Dorsolateral prefrontal cortex (tissue), 120 donors: ENCODE measurements at regions of chr3 and their contacts with region 1.

Region 1: GRCh38 chr3:141875374-141875892 is 1.0 kb upstream of the ATP1B3 start:
- DNase-seq: peak; percentile 72 to 90 (median 85)
- H3K4me3 ChIP-seq: peak overlapping the region; percentile 64 to 98 (median 87)
- H3K27ac ChIP-seq: peak overlapping the region; percentile 78 to 100 (median 98)
- H3K27me3 ChIP-seq: no peaks in the 10 kb centered on the region
- CTCF ChIP-seq: peak; percentile 62 to 91 (median 79)

Region 2: DNA sequence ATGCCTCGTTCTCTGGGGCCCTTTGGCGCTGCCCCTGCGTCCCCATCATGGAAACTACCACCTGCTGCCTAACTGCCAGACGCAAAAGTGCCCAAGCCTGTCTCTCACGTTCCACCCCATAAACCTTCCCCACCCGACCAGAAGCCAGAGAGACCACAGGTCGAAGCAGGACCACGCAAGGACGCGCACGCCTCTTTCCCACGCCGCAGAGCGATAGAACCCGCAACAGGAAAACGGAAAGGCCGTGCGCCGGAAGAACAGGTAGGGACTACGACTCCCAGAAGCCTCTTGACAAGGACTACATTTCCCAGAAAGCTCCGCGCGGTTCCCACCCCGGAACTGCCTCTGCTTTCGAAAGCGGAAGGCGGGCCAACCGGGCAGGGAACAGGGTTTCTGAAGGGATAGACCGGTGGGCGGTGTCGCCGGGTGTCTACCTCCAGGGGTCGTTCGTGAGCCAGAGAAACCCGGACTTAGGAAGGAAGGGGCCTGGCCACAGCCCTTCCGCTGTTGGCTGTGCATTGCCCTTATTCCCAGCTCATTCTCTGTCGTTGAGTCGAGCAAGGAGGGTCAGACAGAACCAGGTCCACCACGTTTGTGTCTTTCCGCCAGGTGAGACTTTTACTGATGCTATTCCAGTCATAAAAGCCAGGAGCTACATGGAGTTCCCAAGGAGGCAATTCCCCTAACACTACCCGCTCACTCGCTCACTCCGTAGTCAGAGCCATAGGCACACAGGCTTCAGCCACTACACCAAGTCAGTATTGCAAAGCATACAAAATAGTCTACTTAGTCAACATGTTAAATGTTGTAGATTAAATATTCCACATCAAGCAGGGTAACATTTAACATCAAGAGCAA is 563.7 kb before region 1 on chr3:
- intact Hi-C with region 1: loop called in 1 of 2 experiments (anchors 5 kb)
- DNase-seq: peak; percentile 97 to 99 (median 98)
- H3K4me3 ChIP-seq: peak overlapping the region; percentile 54 to 94 (median 75)
- H3K27ac ChIP-seq: peak overlapping the region; percentile 36 to 95 (median 83)
- H3K27me3 ChIP-seq: no peaks in the 10 kb centered on the region
- CTCF ChIP-seq: peak; percentile 50 to 92 (median 82)

Region 3: DNA sequence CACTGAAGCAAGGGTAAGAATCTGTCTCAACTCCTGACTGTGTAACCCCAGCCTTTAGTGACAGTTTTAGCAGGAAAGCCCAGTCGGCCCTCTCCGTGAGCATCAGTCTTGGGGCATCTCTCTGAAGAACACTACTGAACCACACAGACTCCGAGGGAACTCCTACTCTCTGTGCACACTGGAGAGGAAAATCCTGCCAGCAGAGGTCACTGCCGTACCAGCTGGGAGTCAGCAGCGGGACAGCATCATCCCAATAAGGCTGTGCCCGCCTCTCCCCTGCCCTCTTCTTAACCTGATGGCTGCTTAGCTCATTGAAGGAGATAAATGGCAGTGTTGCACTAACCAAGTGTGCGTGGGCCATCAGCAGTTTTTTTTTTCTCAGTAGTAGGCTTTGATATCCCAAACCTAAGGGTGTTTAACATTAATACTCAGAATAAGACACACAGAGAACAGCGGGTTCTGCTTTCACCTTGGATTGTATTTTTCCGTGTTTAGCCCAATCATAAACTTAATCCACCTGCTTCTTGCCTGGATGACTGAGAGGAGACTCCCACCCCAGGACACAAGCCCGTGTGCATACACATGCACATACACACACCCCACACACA is 415.2 kb before region 1 on chr3:
- intact Hi-C with region 1: loop called in 1 of 2 experiments (anchors 10 kb)
- DNase-seq: peak; percentile 80 to 92 (median 88)
- H3K4me3 ChIP-seq: no peak overlapping the region
- H3K27ac ChIP-seq: no peak overlapping the region
- H3K27me3 ChIP-seq: no peaks in the 10 kb centered on the region
- CTCF ChIP-seq: peak; percentile 50 to 98 (median 90)

Region 4: DNA sequence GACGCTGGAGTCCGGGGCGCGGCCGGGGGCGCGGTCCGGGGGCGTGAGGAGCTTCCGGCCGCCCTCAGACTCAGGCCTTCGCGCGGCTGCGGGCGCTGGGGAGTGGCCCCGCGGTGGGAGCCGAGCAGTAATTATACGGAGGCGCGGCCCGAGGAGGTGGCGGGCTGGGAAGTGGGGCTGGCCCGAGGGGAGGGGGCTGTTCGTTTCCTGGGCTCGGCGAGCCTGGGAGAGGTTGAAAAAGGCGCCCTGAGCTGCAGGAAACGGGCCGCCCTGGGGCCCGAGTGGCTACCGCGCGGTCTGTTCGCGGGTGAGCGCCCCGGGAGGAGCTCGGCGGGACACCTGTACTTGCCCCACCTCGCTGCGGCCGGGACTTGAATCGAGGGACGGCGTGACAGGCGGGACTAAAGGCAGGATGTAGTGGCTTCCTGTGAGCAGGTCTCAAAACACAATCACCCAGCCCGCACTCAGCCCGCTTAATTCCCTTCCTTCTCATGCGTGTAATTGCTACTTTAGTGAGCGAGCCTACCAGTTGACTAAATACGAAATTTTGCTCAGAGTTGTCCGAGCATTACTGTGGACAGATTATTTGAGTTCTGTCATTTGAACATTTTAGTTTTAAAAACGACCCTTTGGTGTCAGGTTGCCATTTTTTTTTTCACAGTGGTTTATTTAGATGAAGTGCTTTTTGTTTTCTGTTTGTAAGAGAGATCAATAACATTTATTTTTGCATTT is 387.7 kb before region 1 on chr3:
- intact Hi-C with region 1: loop called in 1 of 2 experiments (anchors 5 kb)
- DNase-seq: peak in 9 of 10 donors; percentile 37 to 74 (median 62)
- H3K4me3 ChIP-seq: peak overlapping the region; percentile 39 to 93 (median 82)
- H3K27ac ChIP-seq: peak overlapping the region in 57 of 59 donors; percentile 9 to 95 (median 85)
- H3K27me3 ChIP-seq: no peaks in the 10 kb centered on the region
- CTCF ChIP-seq: peak in 3 of 56 donors; percentile 3 to 17 (median 5)

Region 5: DNA sequence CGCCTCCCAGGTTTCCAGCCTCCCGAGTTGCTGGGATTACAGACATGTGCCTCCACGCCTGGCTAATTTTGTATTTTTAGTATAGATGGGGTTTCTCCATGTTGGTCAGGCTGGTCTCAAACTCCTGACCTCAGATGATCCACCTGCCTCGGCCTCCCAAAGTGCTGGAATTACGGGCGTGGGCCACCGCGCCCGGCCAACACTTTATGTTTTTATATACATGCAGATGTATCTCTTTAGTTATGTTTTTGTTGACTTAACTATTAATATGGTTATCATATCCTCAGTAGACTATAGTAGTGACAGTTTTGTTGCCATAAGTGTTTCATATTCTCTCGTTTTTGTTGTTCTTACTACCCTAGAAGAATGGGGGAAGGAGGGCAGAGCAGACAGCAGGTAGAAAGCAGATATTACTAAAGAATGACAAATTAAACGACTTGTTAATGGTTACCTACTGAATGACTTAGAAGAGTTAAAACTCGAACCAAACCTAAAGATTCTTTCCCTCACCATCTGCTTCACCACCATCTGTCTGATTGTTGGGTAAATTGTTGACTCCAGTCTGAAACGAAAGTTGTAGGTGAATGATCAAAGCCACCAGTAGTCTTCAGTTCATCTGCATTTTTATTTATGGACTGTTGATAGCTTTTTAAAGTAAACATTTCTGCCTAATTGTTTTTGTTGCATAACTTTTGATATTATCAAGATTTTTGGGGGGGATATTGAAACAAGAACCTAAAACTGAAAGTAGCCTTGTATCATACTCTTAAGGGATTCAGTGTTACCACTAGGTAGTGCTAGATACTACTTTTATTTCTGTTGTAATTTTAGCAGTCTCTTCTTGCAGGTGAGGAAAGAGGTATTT is 299.3 kb before region 1 on chr3:
- intact Hi-C with region 1: loop called in 1 of 2 experiments (anchors 10 kb)
- DNase-seq: no peak
- H3K4me3 ChIP-seq: peak overlapping the region in 6 of 59 donors; percentile 7 to 36 (median 9)
- H3K27ac ChIP-seq: peak overlapping the region in 1 of 59 donors; percentile 6
- H3K27me3 ChIP-seq: no peaks in the 10 kb centered on the region
- CTCF ChIP-seq: peak in 55 of 56 donors; percentile 38 to 78 (median 56)

Region 6: DNA sequence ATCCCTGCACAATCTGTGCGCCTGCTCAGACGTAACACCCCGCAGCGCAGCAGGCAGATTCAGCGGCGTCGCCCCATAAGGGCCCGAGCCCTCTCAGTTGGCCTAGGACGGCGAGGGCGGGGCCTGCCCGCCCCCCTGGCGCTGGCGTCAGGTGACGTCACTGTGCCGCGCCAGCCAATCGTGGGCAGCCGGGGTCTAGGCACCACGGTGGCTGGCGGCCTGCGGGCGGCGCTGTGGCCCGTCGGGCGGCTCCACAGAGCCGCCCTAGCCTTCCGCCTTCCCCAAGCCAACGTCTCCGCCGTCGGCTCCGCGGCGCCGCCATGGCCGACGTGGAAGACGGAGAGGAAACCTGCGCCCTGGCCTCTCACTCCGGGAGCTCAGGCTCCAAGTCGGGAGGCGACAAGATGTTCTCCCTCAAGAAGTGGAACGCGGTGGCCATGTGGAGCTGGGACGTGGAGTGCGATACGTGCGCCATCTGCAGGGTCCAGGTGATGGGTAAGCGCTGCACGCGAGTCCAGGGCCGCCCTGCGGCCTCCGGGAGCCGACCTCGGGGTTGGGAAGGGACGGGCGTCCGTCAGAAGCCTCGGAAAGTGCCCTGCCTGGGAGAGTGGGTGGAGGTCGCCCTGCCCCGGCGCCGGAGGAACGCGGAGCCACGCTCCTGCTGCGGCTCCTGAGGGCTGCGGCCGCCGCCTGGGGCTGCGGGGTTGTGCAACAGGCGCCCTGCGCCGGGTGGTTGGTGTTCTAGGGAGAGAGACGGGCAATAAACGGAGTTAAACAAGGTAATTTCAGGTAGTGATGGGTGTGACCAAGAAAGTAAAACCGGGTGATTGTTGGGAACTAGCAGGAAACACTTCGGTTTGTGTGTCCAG is 137.2 kb before region 1 on chr3 and contains the start of gene RNF7:
- intact Hi-C with region 1: loop called (anchors 1 kb)
- DNase-seq: peak; percentile 89 to 96 (median 92)
- H3K4me3 ChIP-seq: peak within 1 kb of the TSS; percentile 71 to 100 (median 94)
- H3K27ac ChIP-seq: peak within 1 kb of the TSS; percentile 53 to 98 (median 93)
- H3K27me3 ChIP-seq: no peaks in the 10 kb centered on the region
- CTCF ChIP-seq: peak; percentile 64 to 99 (median 94)
- total RNA-seq, gene RNF7: 33.6 to 68.4 (median 46.7) TPM

Region 7: DNA sequence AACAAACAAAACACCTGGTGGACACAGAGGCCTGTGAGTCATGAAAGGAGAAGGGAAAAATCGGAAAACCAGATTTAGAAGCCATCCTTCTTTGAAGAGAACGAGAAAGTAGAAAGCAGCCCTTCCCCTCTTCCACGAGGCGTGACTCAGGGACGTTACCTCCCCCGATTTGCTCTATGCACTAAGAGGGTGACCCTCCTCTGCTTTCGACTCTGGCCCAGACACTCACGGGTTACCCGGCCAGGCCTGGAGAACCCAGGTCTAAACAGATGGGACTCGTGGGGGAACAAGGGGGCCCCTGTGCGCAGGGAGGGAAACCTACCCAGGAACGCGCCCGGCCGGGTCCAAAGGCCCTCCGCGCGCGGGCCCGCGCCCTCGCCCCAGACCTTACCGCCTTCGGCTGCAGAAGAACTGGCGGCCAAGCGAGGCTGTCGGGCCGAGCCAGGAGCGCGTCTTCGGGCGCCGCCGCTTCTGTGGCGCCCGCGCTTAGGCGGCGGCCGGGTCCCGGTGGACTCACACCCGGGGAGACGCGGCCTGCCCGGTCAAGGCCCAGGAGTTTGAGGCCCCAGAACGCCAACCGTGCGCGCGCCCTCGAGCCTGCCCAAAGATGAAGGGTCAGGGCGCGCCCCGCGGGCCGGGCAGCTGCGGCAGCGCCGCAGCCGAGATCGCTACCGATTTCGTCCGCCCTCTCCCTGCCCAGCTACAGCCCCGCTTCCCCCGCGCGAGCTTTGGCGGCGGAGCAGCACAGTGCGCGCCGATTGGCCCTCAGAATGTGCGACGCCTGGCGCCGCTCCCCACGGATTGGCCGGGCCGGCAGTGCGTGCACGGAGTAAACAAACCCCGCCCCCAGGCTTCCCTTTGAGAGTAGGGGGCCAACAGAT is 273.6 kb after region 1 on chr3 and contains the start of gene TFDP2:
- intact Hi-C with region 1: loop called in 1 of 2 experiments (anchors 10 kb)
- DNase-seq: peak; percentile 81 to 96 (median 90)
- H3K4me3 ChIP-seq: peak within 1 kb of the TSS; percentile 58 to 96 (median 84)
- H3K27ac ChIP-seq: peak within 1 kb of the TSS in 54 of 59 donors; percentile 2 to 91 (median 72)
- H3K27me3 ChIP-seq: no peaks in the 10 kb centered on the region
- CTCF ChIP-seq: peak in 33 of 56 donors; percentile 6 to 50 (median 22)
- total RNA-seq, gene TFDP2: 32.6 to 102 (median 54.8) TPM